MCF 10A (cell line): ENCODE measurements at regions of chr15 and their contacts with region 1.

Region 1: GRCh38 chr15:80695104-80695910 is at the start of gene ABHD17C:
- DNase-seq: peak; percentile 65
- H3K4me3 Mint-ChIP-seq: peak within 1 kb of the TSS; percentile 92
- H3K27ac Mint-ChIP-seq: peak within 1 kb of the TSS; percentile 73
- H3K4me1 Mint-ChIP-seq: peaks cover 39% of the 10 kb centered on the region
- H3K27me3 Mint-ChIP-seq: no peaks in the 10 kb centered on the region
- CTCF ChIP-seq: no peak
- total RNA-seq, gene ABHD17C: 10.1 and 11.9 TPM in 2 replicates

Region 2: DNA sequence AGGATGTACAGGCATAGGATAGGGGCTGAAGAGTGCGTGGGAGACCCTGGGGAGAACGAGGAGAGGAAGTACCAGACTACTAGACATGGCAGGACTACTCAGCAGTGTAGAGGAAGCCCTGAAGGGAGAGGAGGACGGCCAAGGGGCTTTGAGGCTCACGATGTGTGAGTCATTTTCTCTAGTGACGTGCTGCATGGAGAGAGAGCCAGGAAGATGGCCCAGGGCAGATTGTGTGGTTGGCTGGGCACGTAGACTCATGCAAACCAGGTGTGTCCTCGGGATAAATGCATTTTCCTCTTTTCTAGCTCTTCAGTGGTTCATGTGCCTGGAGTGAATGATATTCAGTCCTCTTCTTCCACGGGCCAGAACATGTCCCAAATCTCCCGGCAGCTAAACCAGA is 115.2 kb before region 1 on chr15:
- CTCF ChIA-PET with region 1: interaction called, 12 read pairs
- POLR2A ChIA-PET with region 1: interaction called, 62 read pairs
- intact Hi-C with region 1: loop called (anchors 5 kb)
- DNase-seq: peak; percentile 98
- H3K4me3 Mint-ChIP-seq: peak overlapping the region; percentile 1
- H3K27ac Mint-ChIP-seq: peak overlapping the region; percentile 91
- H3K4me1 Mint-ChIP-seq: peaks cover 35% of the 10 kb centered on the region
- H3K27me3 Mint-ChIP-seq: no peaks in the 10 kb centered on the region
- CTCF ChIP-seq: no peak

Region 3: GRCh38 chr15:80609512-80609946 is 85.8 kb before region 1 on chr15:
- CTCF ChIA-PET with region 1: interaction called, 3 read pairs
- POLR2A ChIA-PET with region 1: interaction called, 20 read pairs
- intact Hi-C with region 1: no loop called
- DNase-seq: peak; percentile 75
- H3K4me3 Mint-ChIP-seq: no peak overlapping the region
- H3K27ac Mint-ChIP-seq: peak overlapping the region; percentile 68
- H3K4me1 Mint-ChIP-seq: peaks cover 24% of the 10 kb centered on the region
- H3K27me3 Mint-ChIP-seq: no peaks in the 10 kb centered on the region
- CTCF ChIP-seq: no peak

Region 4: GRCh38 chr15:80660122-80660521 is 35.2 kb before region 1 on chr15:
- CTCF ChIA-PET with region 1: interaction called, 5 read pairs
- POLR2A ChIA-PET with region 1: interaction called, 38 read pairs
- intact Hi-C with region 1: loop called (anchors 5 kb)
- DNase-seq: peak; percentile 63
- H3K4me3 Mint-ChIP-seq: no peak overlapping the region
- H3K27ac Mint-ChIP-seq: no peak overlapping the region
- H3K4me1 Mint-ChIP-seq: peaks cover 17% of the 10 kb centered on the region
- H3K27me3 Mint-ChIP-seq: no peaks in the 10 kb centered on the region
- CTCF ChIP-seq: peak; percentile 48

Region 5: GRCh38 chr15:80710635-80711554 is 15.6 kb after region 1 on chr15:
- CTCF ChIA-PET with region 1: interaction called, 38 read pairs
- POLR2A ChIA-PET with region 1: interaction called, 74 read pairs
- intact Hi-C with region 1: no loop called
- DNase-seq: no peak
- H3K4me3 Mint-ChIP-seq: no peak overlapping the region
- H3K27ac Mint-ChIP-seq: no peak overlapping the region
- H3K4me1 Mint-ChIP-seq: peaks cover 20% of the 10 kb centered on the region
- H3K27me3 Mint-ChIP-seq: no peaks in the 10 kb centered on the region
- CTCF ChIP-seq: no peak

Region 6: GRCh38 chr15:80730926-80731325 is 35.6 kb after region 1 on chr15:
- CTCF ChIA-PET with region 1: no interaction called
- POLR2A ChIA-PET with region 1: no interaction called
- intact Hi-C with region 1: no loop called
- DNase-seq: no peak
- H3K4me3 Mint-ChIP-seq: no peak overlapping the region
- H3K27ac Mint-ChIP-seq: no peak overlapping the region
- H3K4me1 Mint-ChIP-seq: no peaks in the 10 kb centered on the region
- H3K27me3 Mint-ChIP-seq: no peaks in the 10 kb centered on the region
- CTCF ChIP-seq: no peak

Region 7: DNA sequence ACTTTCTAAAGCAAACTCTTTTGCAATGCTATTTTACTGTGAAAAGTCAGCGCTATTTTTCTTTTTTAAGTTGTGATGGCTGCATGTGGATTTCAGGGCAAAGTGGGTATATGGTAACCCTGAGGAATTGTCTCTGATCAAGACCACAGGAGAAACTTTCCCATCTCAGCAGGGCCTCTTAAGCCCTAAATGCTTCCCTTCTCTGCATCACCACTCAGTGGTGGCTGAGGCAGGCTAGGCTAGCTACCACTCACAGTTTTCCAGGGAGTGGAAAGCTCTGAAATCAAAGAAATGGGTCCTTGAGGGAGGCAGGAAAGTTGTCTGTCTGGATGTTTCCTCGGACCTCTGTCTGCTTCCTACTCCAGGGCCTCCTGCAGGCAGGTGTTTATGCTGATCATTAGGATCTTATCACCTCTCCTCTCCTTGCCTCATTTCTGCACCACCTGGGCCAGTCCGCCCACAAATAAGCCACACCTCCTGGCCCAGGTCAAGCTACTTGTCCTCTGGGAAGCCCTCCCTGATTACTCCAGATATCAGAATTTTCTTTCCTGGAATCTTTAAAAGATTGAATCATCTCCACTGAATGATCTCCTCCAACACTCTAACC is 120.8 kb after region 1 on chr15:
- CTCF ChIA-PET with region 1: no interaction called
- POLR2A ChIA-PET with region 1: no interaction called
- intact Hi-C with region 1: no loop called
- DNase-seq: no peak
- H3K4me3 Mint-ChIP-seq: no peak overlapping the region
- H3K27ac Mint-ChIP-seq: no peak overlapping the region
- H3K4me1 Mint-ChIP-seq: no peaks in the 10 kb centered on the region
- H3K27me3 Mint-ChIP-seq: no peaks in the 10 kb centered on the region
- CTCF ChIP-seq: no peak